ENCODE measurements at regions of chrX and their contacts with region 1.

Region 1: GRCh38 chrX:86604607-86605006 is 456.4 kb downstream of the DACH2 start:
- DNase-seq: no peak

Region 2: GRCh38 chrX:85828771-85829170 is 775.8 kb before region 1 on chrX:
- intact Hi-C with region 1: no loop called
- DNase-seq: no peak

Region 3: GRCh38 chrX:86724277-86724676 is 119.7 kb after region 1 on chrX:
- intact Hi-C with region 1: loop called in 1 of 2 experiments (anchors 5 kb)
- DNase-seq: no peak

Measured in posterior vena cava (tissue), 2 donors.